HCT116 (cell line): ENCODE measurements at regions of chr4 and their contacts with region 1.

Region 1: DNA sequence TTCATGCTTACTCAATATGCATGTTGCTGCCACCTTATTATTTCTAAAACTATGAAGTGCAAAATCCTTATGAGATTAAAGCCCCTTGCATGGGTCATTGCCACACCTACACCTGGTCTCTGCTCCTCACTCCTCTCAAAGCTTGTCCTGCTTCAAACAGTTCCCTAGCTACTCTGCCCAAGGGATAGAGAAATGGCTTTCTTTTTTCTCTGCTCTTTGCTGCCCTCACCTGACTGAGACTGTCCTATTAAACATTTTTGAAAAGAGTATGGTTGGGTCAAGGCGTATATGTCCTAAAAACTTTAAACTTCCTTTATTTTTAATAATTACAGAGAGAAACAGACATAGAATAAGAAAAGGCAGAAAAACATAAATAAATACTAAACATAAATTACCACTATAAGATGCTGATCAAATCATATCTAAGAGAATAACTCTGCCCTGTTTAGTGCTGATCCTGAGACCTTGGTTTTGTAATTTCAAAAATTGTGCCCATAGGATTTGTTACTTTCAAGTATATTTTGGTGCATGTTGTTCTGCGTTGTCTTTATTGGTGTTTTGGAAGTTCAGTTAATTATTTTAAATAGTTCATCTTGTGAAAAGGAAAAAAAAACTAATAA is 704.9 kb upstream of the PABPC4L start:
- DNase-seq: no peak
- ATAC-seq: peak; percentile 79
- H3K4me3 ChIP-seq: no peak overlapping the region
- H3K27ac ChIP-seq: no peak overlapping the region
- H3K4me1 ChIP-seq: no peaks in the 10 kb centered on the region
- H3K27me3 ChIP-seq: no peaks in the 10 kb centered on the region
- CTCF ChIP-seq: peak; percentile 23 to 56 (median 30); a peak in 4 of 6 replicates
- POLR2A ChIP-seq: no peak
- RAD21 ChIP-seq: peak; percentile 60

Region 2: DNA sequence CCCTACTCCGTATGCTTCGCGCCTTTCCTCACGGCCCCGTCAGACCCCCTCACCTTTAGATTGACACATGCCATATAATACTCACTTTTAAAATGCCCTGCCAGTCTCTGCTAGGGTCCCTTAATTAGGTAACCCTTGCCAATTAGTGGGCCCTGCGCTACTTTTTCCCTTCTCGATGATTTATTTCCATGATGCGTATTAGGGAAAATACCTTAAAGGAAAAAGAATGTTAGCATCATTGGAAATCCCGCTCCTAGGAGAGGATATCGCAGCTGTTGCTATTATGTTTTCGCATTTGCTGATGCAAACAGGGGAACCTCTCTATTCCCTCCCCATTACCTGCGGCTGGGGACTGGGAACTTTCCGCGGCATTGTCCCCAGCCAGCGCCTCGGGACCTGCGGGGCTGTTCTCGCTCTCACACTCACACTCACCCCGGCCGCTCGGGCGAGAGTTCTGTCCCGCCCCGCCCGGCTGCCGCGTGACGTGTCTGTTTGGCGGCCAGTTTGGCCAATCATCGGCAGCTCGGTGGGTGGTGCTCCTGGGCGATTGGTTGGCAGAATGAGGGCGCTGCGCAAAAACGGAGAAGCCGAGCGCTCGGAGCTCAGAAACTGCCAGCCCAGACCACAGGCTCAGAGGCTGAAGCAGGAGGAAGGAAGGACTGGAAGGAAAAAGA is 1757.7 kb before region 1 on chr4 and contains the start of gene PCDH10:
- CTCF ChIA-PET with region 1: interaction called, 4 read pairs
- POLR2A ChIA-PET with region 1: no interaction called
- RAD21 ChIA-PET with region 1: interaction called in 1 of 2 experiments, 3 read pairs
- intact Hi-C with region 1: loop called (anchors 10 kb)
- DNase-seq: no peak
- ATAC-seq: no peak
- H3K4me3 ChIP-seq: no peak within 1 kb of the TSS
- H3K27ac ChIP-seq: no peak within 1 kb of the TSS
- H3K4me1 ChIP-seq: no peaks in the 10 kb centered on the region
- H3K27me3 ChIP-seq: no peaks in the 10 kb centered on the region
- CTCF ChIP-seq: no peak
- POLR2A ChIP-seq: no peak
- RAD21 ChIP-seq: no peak
- total RNA-seq, gene PCDH10: not detected

Region 3: GRCh38 chr4:134677209-134677814 is 229.2 kb before region 1 on chr4:
- CTCF ChIA-PET with region 1: no interaction called
- POLR2A ChIA-PET with region 1: no interaction called
- RAD21 ChIA-PET with region 1: no interaction called
- intact Hi-C with region 1: no loop called
- DNase-seq: no peak
- ATAC-seq: no peak
- H3K4me3 ChIP-seq: no peak overlapping the region
- H3K27ac ChIP-seq: no peak overlapping the region
- H3K4me1 ChIP-seq: no peaks in the 10 kb centered on the region
- H3K27me3 ChIP-seq: no peaks in the 10 kb centered on the region
- CTCF ChIP-seq: no peak
- POLR2A ChIP-seq: no peak
- RAD21 ChIP-seq: no peak